BJ (cell line): ENCODE measurements at regions of chr5 and their contacts with region 1.

Region 1: DNA sequence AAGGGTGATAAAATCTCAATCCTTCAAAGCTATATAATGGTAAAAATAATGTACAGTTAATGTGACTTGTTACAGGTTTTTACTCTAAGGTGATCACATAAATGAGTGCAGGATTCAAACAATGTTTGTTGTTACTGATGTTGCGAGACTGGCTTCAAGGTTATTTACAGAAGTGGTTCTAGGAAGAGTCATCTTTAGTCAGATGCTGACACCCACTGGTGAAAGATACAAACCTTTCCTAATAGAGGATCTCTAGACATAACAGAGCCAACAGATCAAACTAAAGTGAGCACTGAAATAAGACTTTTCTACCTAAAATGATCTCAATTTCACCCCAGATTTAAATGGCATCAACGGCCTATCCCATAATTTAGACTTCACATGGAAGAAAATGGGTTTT is 20.2 kb downstream of the ARSB start:
- DNase-seq: no peak
- H3K4me3 ChIP-seq: no peak overlapping the region
- H3K27me3 ChIP-seq: no peaks in the 10 kb centered on the region
- CTCF ChIP-seq: peak; percentile 55

Region 2: GRCh38 chr5:78537821-78538220 is 427.1 kb before region 1 on chr5:
- CTCF ChIA-PET with region 1: interaction called, 10 read pairs
- POLR2A ChIA-PET with region 1: no interaction called
- DNase-seq: no peak
- H3K4me3 ChIP-seq: no peak overlapping the region
- H3K27me3 ChIP-seq: no peaks in the 10 kb centered on the region
- CTCF ChIP-seq: peak; percentile 63

Region 3: DNA sequence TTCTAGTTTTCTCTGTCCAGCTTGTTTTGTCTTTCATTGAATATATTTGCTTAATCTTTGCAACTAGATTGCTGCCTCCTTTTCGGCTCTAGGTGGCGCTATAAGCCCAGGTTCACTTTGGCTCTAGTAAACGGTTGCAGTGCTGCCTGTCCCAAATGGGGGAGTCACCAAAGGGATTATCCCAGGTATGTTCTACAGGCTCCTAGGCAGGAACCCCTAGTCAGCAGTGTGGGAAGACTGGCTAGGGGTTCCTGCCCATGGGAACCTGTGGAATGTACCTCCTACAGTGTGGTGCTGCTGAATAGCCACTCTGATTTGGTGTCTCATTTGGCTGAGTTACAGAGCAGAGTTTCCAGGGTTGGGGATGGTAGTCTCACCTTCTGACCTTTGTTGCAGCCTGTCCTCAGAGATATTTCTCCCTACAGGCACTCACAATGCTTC is 64.9 kb before region 1 on chr5:
- CTCF ChIA-PET with region 1: interaction called, 75 read pairs
- POLR2A ChIA-PET with region 1: no interaction called
- DNase-seq: no peak
- H3K4me3 ChIP-seq: no peak overlapping the region
- H3K27me3 ChIP-seq: no peaks in the 10 kb centered on the region
- CTCF ChIP-seq: peak; percentile 81

Region 4: GRCh38 chr5:78984439-78985115 is 19.7 kb after region 1 on chr5:
- CTCF ChIA-PET with region 1: interaction called, 12 read pairs
- POLR2A ChIA-PET with region 1: no interaction called
- DNase-seq: peak; percentile 44
- H3K4me3 ChIP-seq: peak overlapping the region; percentile 72
- H3K27me3 ChIP-seq: no peaks in the 10 kb centered on the region
- CTCF ChIP-seq: peak; percentile 59